SK-N-SH (cell line): ENCODE measurements at regions of chr7 and their contacts with region 1.

Region 1: GRCh38 chr7:142496545-142497041 is 238.7 kb upstream of the PRSS58 start:
- DNase-seq: peak; percentile 67
- H3K4me3 ChIP-seq: no peak overlapping the region
- H3K27ac ChIP-seq: no peak overlapping the region
- H3K4me1 ChIP-seq: peaks cover 0 to 3% of the 10 kb centered on the region in 2 experiments; a peak in 1 of 4 replicates
- H3K27me3 ChIP-seq: peaks cover 21% of the 10 kb centered on the region; the same call in 1 of the 2 replicates
- CTCF ChIP-seq: peak; percentile 95
- EP300 ChIP-seq: no peak
- RAD21 ChIP-seq: peak; percentile 69

Region 2: GRCh38 chr7:142508258-142508689 is 11.7 kb after region 1 on chr7:
- CTCF ChIA-PET with region 1: interaction called, 40 read pairs
- POLR2A ChIA-PET with region 1: no interaction called
- DNase-seq: no peak
- H3K4me3 ChIP-seq: no peak overlapping the region
- H3K27ac ChIP-seq: no peak overlapping the region
- H3K4me1 ChIP-seq: no peaks in the 10 kb centered on the region
- H3K27me3 ChIP-seq: peaks cover 62% of the 10 kb centered on the region
- CTCF ChIP-seq: no peak
- EP300 ChIP-seq: no peak
- RAD21 ChIP-seq: no peak

Region 3: GRCh38 chr7:142516038-142516501 is 19.5 kb after region 1 on chr7:
- CTCF ChIA-PET with region 1: interaction called, 99 read pairs
- POLR2A ChIA-PET with region 1: no interaction called
- DNase-seq: peak; percentile 69
- H3K4me3 ChIP-seq: peak overlapping the region in 1 of 2 experiments; percentile 20; a peak in 1 of 4 replicates
- H3K27ac ChIP-seq: no peak overlapping the region; a peak in 1 of 4 replicates
- H3K4me1 ChIP-seq: peaks cover 0 to 18% of the 10 kb centered on the region in 2 experiments; a peak in 2 of 4 replicates
- H3K27me3 ChIP-seq: peaks cover 33% of the 10 kb centered on the region
- CTCF ChIP-seq: peak; percentile 96
- EP300 ChIP-seq: no peak
- RAD21 ChIP-seq: peak; percentile 85

Region 4: GRCh38 chr7:142523821-142524460 is 27.3 kb after region 1 on chr7:
- CTCF ChIA-PET with region 1: interaction called, 99 read pairs
- POLR2A ChIA-PET with region 1: no interaction called
- DNase-seq: no peak
- H3K4me3 ChIP-seq: no peak overlapping the region
- H3K27ac ChIP-seq: no peak overlapping the region
- H3K4me1 ChIP-seq: peaks cover 0 to 11% of the 10 kb centered on the region in 2 experiments; a peak in 2 of 4 replicates
- H3K27me3 ChIP-seq: peaks cover 63% of the 10 kb centered on the region; the same call in 1 of the 2 replicates
- CTCF ChIP-seq: peak; percentile 39; the same call in 1 of the 2 replicates
- EP300 ChIP-seq: no peak
- RAD21 ChIP-seq: peak; percentile 14; the same call in 1 of the 2 replicates